ENCODE measurements at regions of chr4 and their contacts with region 1.

Region 1: GRCh38 chr4:98658287-98659105 is at the start of gene TSPAN5:
- DNase-seq: peak; percentile 91
- ATAC-seq: peak; percentile 62
- H3K4me3 Mint-ChIP-seq: peak within 1 kb of the TSS; percentile 89
- H3K27ac Mint-ChIP-seq: peak within 1 kb of the TSS; percentile 94
- H3K4me1 Mint-ChIP-seq: peaks cover 78% of the 10 kb centered on the region
- H3K27me3 Mint-ChIP-seq: no peaks in the 10 kb centered on the region
- total RNA-seq, gene TSPAN5: 18.4 to 23.6 TPM

Region 2: DNA sequence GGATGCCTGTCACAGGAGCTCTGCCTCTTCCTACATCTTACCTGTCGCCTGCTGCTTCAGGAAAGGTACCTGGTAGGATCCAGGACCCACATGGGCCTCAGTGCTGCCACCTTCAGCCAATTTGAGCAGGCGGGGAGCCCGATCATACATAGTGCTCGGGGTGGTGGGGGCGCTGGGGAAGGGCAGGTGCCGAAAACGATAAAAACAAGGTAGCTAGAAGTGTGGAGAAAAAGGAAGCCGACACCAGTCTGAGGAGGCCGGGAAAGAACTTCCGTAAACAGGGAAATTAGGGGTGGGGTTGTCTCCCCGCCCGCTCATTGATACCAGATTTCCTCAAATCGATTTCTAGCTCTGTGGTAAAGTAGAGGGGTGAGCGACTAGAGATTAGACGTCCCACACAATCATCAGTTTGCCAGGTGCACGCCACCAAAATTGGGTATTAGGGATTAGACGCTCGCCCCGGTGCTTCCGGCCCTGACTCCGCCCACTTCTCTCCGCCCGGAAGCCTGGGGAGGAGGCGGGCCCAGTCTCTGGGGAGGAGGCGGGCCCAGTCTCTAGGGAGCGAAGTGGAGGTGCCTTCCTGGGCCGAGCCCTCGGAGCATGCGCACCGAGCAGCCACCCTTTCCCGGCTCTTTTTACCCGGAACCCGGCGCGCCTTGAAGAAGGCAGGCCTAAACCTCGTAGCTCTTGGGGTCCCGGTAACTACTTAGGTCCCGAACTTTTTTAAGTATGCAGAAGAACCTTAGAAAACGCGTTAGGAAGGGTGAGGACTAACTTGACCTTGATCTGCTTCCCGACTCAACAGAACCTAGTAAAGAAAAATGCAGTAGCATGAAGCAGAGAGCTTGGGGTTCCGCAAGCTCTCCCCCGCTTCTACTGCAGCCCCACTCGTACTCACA is 515.2 kb before region 1 on chr4 and contains the start of gene STPG2:
- CTCF ChIA-PET with region 1: no interaction called
- POLR2A ChIA-PET with region 1: no interaction called
- intact Hi-C with region 1: loop called (anchors 1 to 2 kb)
- DNase-seq: peak; percentile 96
- ATAC-seq: peak; percentile 100
- H3K4me3 Mint-ChIP-seq: peak within 1 kb of the TSS; percentile 96
- H3K27ac Mint-ChIP-seq: peak within 1 kb of the TSS; percentile 99
- H3K4me1 Mint-ChIP-seq: peaks cover 22% of the 10 kb centered on the region
- H3K27me3 Mint-ChIP-seq: no peaks in the 10 kb centered on the region
- total RNA-seq, gene STPG2: 0.14 to 0.25 TPM

Region 3: GRCh38 chr4:98482847-98483806 is 175.4 kb before region 1 on chr4:
- CTCF ChIA-PET with region 1: interaction called, 3 read pairs
- POLR2A ChIA-PET with region 1: interaction called, 3 read pairs
- intact Hi-C with region 1: loop called (anchors 1 kb)
- DNase-seq: peak; percentile 74
- ATAC-seq: peak; percentile 84
- H3K4me3 Mint-ChIP-seq: peak overlapping the region; percentile 54
- H3K27ac Mint-ChIP-seq: peak overlapping the region; percentile 98
- H3K4me1 Mint-ChIP-seq: peaks cover 80% of the 10 kb centered on the region
- H3K27me3 Mint-ChIP-seq: no peaks in the 10 kb centered on the region

Region 4: GRCh38 chr4:98639523-98639922 is 19.0 kb before region 1 on chr4:
- CTCF ChIA-PET with region 1: interaction called, 4 read pairs
- POLR2A ChIA-PET with region 1: interaction called, 4 read pairs
- intact Hi-C with region 1: loop called (anchors 2 kb)
- DNase-seq: no peak
- ATAC-seq: peak; percentile 66
- H3K4me3 Mint-ChIP-seq: peak overlapping the region; percentile 40
- H3K27ac Mint-ChIP-seq: peak overlapping the region; percentile 79
- H3K4me1 Mint-ChIP-seq: peaks cover 49% of the 10 kb centered on the region
- H3K27me3 Mint-ChIP-seq: no peaks in the 10 kb centered on the region

Region 5: GRCh38 chr4:98890702-98891455 is 232.4 kb after region 1 on chr4:
- CTCF ChIA-PET with region 1: no interaction called
- POLR2A ChIA-PET with region 1: interaction called, 10 read pairs
- intact Hi-C with region 1: no loop called
- DNase-seq: no peak
- ATAC-seq: no peak
- H3K4me3 Mint-ChIP-seq: no peak overlapping the region
- H3K27ac Mint-ChIP-seq: no peak overlapping the region
- H3K4me1 Mint-ChIP-seq: no peaks in the 10 kb centered on the region
- H3K27me3 Mint-ChIP-seq: no peaks in the 10 kb centered on the region

Region 6: GRCh38 chr4:99054428-99054994 is 396.0 kb after region 1 on chr4:
- CTCF ChIA-PET with region 1: interaction called, 3 read pairs
- POLR2A ChIA-PET with region 1: no interaction called
- intact Hi-C with region 1: loop called (anchors 5 to 10 kb)
- DNase-seq: no peak
- ATAC-seq: peak; percentile 23
- H3K4me3 Mint-ChIP-seq: no peak overlapping the region
- H3K27ac Mint-ChIP-seq: peak overlapping the region; percentile 63
- H3K4me1 Mint-ChIP-seq: peaks cover 44% of the 10 kb centered on the region
- H3K27me3 Mint-ChIP-seq: no peaks in the 10 kb centered on the region

Region 7: GRCh38 chr4:99352602-99353537 is 694.4 kb after region 1 on chr4 and contains the start of gene ADH1C:
- CTCF ChIA-PET with region 1: no interaction called
- POLR2A ChIA-PET with region 1: no interaction called
- intact Hi-C with region 1: no loop called
- DNase-seq: no peak
- ATAC-seq: no peak
- H3K4me3 Mint-ChIP-seq: no peak within 1 kb of the TSS
- H3K27ac Mint-ChIP-seq: no peak within 1 kb of the TSS
- H3K4me1 Mint-ChIP-seq: peaks cover 4% of the 10 kb centered on the region
- H3K27me3 Mint-ChIP-seq: peaks cover 8% of the 10 kb centered on the region
- total RNA-seq, gene ADH1C: not detected

Measured in activated CD4-positive, alpha-beta T cell treated with anti-CD3 and anti-CD28 coated beads for 36 hours (primary cell).